ENCODE measurements at regions of chr19 and their contacts with region 1.

Region 1: DNA sequence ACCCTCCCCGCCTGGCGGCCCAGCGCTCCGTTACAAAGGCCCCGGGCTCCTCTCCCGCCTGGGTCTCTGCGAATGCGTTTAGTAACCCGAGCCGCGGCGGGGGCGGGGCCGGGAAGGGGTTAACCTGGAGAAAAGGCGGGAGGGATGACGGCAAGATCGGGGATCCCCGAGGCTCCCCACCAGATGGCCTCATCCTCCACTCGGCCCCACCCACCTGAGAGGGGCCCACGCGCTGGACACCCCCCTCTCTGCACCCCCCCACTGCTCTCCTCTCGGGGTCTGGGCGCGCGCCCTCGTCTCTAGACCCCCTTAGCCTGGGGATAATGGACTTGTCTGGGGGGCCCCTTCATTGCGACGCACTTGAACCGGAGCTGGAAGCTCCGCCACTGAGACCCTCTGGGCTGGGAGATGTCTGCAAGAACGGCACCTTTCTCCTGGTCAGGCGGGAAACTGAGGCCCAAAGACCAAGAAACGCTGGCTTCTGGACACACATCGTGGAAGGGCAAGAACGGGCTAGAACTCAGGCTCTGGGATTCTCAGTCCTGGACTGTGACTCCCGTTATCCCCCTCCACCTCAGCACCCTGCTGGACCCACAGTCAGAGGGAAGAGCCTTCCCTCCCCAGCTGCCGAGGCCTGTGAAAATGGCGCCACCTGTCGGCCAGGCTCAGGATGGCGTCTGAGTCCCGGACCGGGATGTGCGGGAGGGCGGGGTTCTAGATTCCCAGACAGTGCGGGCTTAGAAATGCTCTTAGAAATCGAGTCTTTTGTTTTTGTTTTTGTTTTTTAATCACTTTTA is 2.9 kb upstream of the LTBP4 start:
- DNase-seq: peak; percentile 92
- H3K4me3 ChIP-seq: no peak overlapping the region
- H3K27ac ChIP-seq: no peak overlapping the region
- H3K4me1 ChIP-seq: peaks cover 22% of the 10 kb centered on the region
- H3K27me3 ChIP-seq: peaks cover 41% of the 10 kb centered on the region
- CTCF ChIP-seq: peak; percentile 98

Region 2: GRCh38 chr19:40529093-40529954 is 69.0 kb before region 1 on chr19:
- intact Hi-C with region 1: loop called (anchors 5 kb)
- DNase-seq: peak; percentile 83
- H3K4me3 ChIP-seq: peak overlapping the region; percentile 48
- H3K27ac ChIP-seq: no peak overlapping the region
- H3K4me1 ChIP-seq: no peaks in the 10 kb centered on the region
- H3K27me3 ChIP-seq: no peaks in the 10 kb centered on the region
- CTCF ChIP-seq: peak; percentile 85

Region 3: DNA sequence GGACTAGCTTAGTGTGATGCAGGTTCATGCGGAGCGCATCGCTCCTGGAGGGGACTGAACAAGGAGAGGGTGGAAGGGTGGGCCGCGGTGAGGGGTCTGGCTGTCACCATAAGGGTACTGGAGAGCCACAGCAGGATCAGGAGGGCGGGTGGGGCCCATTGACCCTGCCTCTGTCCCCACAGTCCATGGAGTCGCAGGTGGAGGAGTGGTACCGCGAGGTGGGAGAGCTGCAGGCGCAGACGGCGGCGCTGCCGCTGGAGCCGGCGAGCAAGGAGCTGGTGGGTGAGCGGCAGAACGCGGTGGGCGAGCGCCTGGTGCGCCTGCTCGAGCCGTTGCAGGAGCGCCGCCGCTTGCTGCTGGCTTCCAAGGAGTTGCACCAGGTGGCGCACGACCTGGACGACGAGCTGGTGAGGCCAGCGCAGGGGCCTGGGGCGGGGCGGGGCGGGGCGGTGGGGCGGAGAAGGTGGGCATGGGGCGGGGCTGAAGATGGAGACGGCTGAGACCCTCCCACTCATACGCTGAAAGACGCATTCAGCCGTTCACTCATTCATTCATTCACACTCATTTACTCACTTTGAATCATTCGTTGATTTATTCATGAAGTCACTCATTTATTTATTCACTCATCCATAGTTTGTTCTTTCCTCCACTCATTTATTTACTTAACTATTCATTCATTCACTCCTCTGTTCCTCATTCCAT is 49.2 kb before region 1 on chr19:
- intact Hi-C with region 1: loop called (anchors 5 kb)
- DNase-seq: peak; percentile 61
- H3K4me3 ChIP-seq: no peak overlapping the region
- H3K27ac ChIP-seq: no peak overlapping the region
- H3K4me1 ChIP-seq: no peaks in the 10 kb centered on the region
- H3K27me3 ChIP-seq: peaks cover 6% of the 10 kb centered on the region
- CTCF ChIP-seq: peak; percentile 40

Region 4: GRCh38 chr19:40721936-40722661 is 123.8 kb after region 1 on chr19:
- intact Hi-C with region 1: no loop called
- DNase-seq: no peak
- H3K4me3 ChIP-seq: no peak overlapping the region
- H3K27ac ChIP-seq: no peak overlapping the region
- H3K4me1 ChIP-seq: peaks cover 8% of the 10 kb centered on the region
- H3K27me3 ChIP-seq: no peaks in the 10 kb centered on the region
- CTCF ChIP-seq: no peak